CD4-positive, alpha-beta memory T cell (primary cell): ENCODE measurements at regions of chr5 and their contacts with region 1.

Region 1: GRCh38 chr5:112174959-112175594 is 244.0 kb downstream of the EPB41L4A start:
- DNase-seq: peak in 4 of 5 donors; percentile 27 to 41 (median 40)
- H3K4me3 ChIP-seq: no peak overlapping the region
- H3K4me3 Mint-ChIP-seq: peak overlapping the region in 2 of 8 donors; percentile 6 to 48
- H3K27ac ChIP-seq: no peak overlapping the region
- H3K27ac Mint-ChIP-seq: no peak overlapping the region
- H3K4me1 ChIP-seq: peaks cover 4% of the 10 kb centered on the region
- H3K4me1 Mint-ChIP-seq: peaks cover 0 to 5% (median 2%) of the 10 kb centered on the region in 4 donors
- H3K27me3 ChIP-seq: no peaks in the 10 kb centered on the region
- H3K27me3 Mint-ChIP-seq: peaks cover 8 to 12% of the 10 kb centered on the region in 2 donors

Region 2: GRCh38 chr5:112419986-112420864 is 245.1 kb after region 1 on chr5:
- CTCF ChIA-PET with region 1: interaction called, 13 read pairs
- POLR2A ChIA-PET with region 1: no interaction called
- intact Hi-C with region 1: no loop called
- DNase-seq: peak in 2 of 5 donors; percentile 10 to 39
- H3K4me3 ChIP-seq: no peak overlapping the region
- H3K4me3 Mint-ChIP-seq: peak overlapping the region in 7 of 8 donors; percentile 10 to 61 (median 33)
- H3K27ac ChIP-seq: no peak overlapping the region
- H3K27ac Mint-ChIP-seq: no peak overlapping the region
- H3K4me1 ChIP-seq: peaks cover 23% of the 10 kb centered on the region
- H3K4me1 Mint-ChIP-seq: peaks cover 7 to 19% (median 14%) of the 10 kb centered on the region in 4 donors
- H3K27me3 ChIP-seq: peaks cover 10% of the 10 kb centered on the region
- H3K27me3 Mint-ChIP-seq: peaks cover 30 to 32% of the 10 kb centered on the region in 2 donors